AG04449 (cell line): ENCODE measurements at regions of chr12 and their contacts with region 1.

Region 1: GRCh38 chr12:48936379-48936979 is 11.2 kb upstream of the FKBP11 start:
- DNase-seq: no peak
- H3K4me3 ChIP-seq: no peak overlapping the region
- CTCF ChIP-seq: peak; percentile 78

Region 2: GRCh38 chr12:48903982-48904411 is 32.5 kb before region 1 on chr12:
- CTCF ChIA-PET with region 1: interaction called, 20 read pairs
- POLR2A ChIA-PET with region 1: no interaction called
- DNase-seq: no peak
- H3K4me3 ChIP-seq: peak overlapping the region; percentile 58
- CTCF ChIP-seq: peak; percentile 72

Region 3: GRCh38 chr12:48957141-48958048 is 20.9 kb after region 1 on chr12 and contains the start of gene ARF3:
- CTCF ChIA-PET with region 1: interaction called, 502 read pairs
- POLR2A ChIA-PET with region 1: interaction called, 10 read pairs
- DNase-seq: no peak
- H3K4me3 ChIP-seq: peak within 1 kb of the TSS; percentile 99
- CTCF ChIP-seq: no peak

Region 4: DNA sequence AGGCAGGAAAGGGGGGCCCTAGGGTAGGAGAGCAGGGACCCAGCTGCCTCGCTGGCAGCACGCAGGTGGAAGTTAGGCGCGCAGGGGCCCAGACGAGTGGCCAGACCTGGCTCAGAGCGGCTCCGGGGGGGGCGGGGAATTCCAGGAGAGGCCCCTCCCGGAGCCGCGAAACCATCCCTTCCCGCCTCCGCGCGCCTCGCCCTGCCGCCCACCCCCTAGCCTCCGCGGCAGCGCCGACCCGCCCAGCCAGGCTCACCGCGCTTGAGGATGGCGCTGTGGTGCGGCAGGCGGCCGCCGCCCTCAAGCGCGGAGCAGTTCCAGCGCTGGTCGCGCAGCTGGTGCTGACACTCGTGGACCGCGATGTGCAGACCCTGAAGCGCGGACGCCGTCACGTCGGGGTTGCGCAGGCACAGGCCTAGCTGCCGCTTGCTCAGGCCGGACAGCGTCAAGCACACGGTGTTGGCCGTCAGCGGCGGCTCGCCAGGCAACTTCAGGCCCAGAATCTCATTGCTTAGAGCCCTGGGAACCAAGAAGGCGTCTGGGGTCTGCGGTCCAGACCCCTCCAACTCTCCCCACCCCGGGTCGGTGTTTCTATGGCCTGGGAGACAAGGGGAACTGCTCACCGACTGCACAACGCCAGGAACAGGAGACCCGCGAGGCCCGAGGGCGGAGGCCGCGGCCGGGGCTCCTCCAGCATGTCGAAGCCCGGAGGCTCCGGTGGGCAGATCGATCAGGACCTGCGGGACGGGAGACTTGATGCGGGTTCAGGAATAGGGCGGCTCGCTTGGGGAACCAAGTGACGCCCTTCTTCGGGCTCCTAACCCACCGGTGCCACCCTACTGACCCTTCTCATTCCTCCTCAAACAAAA is 33.6 kb after region 1 on chr12:
- CTCF ChIA-PET with region 1: interaction called, 16 read pairs
- POLR2A ChIA-PET with region 1: no interaction called
- DNase-seq: no peak
- H3K4me3 ChIP-seq: no peak overlapping the region; the same call in 1 of the 2 replicates
- CTCF ChIP-seq: peak; percentile 19

Region 5: DNA sequence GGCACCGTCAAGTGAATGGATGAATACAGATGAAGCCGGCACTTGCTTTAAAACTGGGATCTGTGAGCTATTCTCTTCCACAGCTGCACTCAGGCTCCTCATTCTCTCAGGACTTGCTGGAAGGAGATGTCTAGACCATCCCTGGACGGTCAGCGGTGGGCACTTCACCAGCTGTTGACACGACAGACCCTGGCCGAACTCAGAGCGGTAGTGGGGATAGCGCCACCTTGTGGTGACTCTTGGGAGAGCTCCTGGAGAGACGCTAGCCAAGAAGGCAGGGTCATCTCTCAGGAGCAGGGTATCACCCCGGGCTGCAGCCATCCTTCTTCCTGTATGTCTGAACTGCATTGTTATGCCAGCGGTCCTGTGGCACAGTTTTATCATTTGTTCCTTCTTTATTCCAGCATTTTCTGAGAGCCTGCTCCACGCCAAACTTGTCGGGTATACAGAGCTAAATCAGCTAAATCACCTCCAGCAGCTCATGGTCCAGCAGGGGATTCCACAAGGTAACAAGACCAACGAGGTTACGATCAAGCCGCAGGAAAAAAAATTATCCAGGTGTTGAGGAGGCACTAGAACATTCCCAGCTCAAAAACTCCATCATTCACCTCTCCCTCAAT is 51.7 kb after region 1 on chr12:
- CTCF ChIA-PET with region 1: interaction called, 14 read pairs
- POLR2A ChIA-PET with region 1: no interaction called
- DNase-seq: no peak
- H3K4me3 ChIP-seq: no peak overlapping the region
- CTCF ChIP-seq: peak; percentile 85

Region 6: DNA sequence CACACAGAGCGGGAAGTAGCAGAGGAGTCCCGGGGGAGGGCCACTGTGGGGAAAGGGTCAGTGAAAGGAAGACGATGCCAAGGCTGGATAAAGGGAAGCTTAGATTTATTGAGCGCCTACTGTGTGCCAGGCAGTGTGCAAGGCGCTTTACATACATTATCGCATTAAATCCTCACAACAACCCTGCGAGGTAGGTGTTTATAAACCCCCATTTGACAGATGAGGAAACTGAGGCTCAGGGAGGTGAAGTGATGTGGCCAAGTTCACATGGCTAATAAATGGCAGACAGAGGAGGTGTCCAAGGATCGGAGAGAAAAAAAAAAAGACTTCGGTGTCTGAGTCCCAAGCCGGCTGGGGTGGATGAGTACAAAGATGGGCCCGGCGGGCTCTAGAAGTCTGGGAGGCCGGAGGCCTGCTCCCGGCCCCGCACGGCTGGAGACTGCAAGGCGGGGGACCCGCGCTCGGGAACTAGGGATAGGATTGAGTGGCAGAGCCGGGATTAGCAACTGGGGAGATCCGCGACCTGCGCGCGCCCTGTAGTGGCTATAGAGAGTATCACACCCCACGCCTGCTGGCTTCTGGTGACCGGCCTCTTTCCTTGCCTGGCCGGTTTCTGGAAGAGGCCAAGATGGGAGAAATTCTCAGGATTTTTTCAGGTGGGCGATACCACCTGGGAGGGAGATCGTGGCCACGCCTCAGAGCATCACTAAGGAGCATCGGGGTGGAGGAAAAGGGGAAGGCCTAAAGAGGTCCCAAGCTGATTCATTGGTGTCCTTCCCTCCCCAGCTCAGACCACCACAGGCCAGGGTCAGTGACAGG is 58.8 kb after region 1 on chr12:
- CTCF ChIA-PET with region 1: interaction called, 14 read pairs
- POLR2A ChIA-PET with region 1: no interaction called
- DNase-seq: no peak
- H3K4me3 ChIP-seq: peak overlapping the region; percentile 25
- CTCF ChIP-seq: peak; percentile 83